Heart right ventricle (tissue), 16 donors: ENCODE measurements at regions of chr14 and their contacts with region 1.

Region 1: DNA sequence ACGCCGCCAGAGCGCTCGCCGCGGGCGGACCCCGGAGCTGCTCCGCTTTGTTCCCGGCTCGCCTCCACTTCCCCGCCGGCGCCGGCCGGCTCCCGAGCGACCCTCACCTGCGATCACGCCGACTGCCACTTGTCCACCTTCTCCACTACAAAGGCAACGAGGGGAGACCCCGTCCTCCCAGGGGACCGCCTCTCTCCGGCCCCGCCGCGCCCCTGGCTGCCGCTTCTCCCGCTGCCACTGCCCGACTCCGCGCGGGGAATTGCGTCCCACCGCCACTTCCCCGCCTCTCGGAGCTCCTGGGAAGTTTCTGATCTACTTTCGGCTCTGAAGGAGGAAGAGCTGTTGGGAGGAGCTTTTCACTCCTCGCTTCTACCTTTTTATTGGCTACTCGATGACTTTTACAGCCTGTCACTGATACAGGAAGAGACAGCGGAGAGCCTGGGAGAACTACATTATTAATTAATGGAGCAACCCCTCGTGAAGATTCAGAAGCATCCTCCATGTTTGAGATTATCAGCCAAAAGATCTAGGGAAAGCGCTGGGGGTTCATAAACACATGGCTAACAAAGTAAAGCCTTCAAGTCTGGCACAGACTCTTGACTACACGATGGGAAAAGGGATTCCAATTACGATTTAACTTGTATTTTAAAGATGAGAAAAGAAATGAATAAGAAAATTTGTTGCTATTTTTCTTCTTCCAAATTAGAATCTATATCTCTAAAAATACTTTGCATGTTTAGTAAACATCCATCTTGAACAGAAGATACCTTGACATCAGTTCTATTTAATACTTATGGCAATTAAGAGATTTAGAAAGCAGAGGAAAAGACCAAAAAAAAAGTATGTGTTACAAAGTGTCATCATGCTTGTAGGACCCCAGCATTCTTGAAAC is at the start of gene BAZ1A:
- DNase-seq: peak; percentile 59 to 65
- ATAC-seq: peak; percentile 22 to 71 (median 56)
- H3K4me3 ChIP-seq: peak within 1 kb of the TSS; percentile 73 to 96 (median 81)
- H3K27ac ChIP-seq: peak within 1 kb of the TSS; percentile 93 to 100 (median 98)
- H3K4me1 ChIP-seq: peaks cover 0 to 36% (median 7%) of the 10 kb centered on the region in 9 donors
- H3K27me3 ChIP-seq: no peaks in the 10 kb centered on the region
- CTCF ChIP-seq: peak in 5 of 9 donors; percentile 5 to 44 (median 41)
- total RNA-seq, gene BAZ1A: 3.8 to 14.5 (median 4.5) TPM

Region 2: GRCh38 chr14:34826661-34827060 is 48.6 kb before region 1 on chr14:
- intact Hi-C with region 1: loop called in 1 of 10 experiments (anchors 5 kb)
- DNase-seq: no peak
- ATAC-seq: no peak
- H3K4me3 ChIP-seq: no peak overlapping the region
- H3K27ac ChIP-seq: no peak overlapping the region
- H3K4me1 ChIP-seq: peaks cover 0 to 5% (median 0%) of the 10 kb centered on the region in 9 donors
- H3K27me3 ChIP-seq: no peaks in the 10 kb centered on the region
- CTCF ChIP-seq: no peak

Region 3: DNA sequence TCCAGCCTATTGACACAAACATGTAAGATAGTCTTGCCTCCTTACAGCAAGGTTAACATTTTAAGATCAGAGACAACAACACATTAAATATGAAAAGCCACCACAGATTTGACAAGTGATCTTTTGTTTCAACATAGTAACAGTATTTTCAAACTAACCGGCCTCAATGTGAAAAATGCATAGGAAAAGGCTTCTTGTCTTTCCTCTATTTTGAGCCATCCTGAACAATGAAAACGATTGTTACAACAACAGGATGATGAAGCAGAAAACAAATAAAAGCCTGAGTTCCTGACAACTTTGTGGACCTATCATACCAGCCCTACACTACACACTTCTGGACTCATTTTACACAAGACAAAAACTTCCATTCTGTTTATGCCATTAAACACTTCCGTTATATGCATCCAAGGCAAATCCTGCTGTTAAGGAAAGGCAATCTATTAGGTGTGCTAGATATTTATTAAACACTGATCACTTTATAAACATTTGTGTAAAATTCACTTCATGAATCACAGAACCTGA is 37.4 kb before region 1 on chr14:
- intact Hi-C with region 1: no loop called
- DNase-seq: no peak
- ATAC-seq: no peak
- H3K4me3 ChIP-seq: no peak overlapping the region
- H3K27ac ChIP-seq: no peak overlapping the region
- H3K4me1 ChIP-seq: peaks cover 0 to 54% (median 10%) of the 10 kb centered on the region in 9 donors
- H3K27me3 ChIP-seq: no peaks in the 10 kb centered on the region
- CTCF ChIP-seq: no peak

Region 4: DNA sequence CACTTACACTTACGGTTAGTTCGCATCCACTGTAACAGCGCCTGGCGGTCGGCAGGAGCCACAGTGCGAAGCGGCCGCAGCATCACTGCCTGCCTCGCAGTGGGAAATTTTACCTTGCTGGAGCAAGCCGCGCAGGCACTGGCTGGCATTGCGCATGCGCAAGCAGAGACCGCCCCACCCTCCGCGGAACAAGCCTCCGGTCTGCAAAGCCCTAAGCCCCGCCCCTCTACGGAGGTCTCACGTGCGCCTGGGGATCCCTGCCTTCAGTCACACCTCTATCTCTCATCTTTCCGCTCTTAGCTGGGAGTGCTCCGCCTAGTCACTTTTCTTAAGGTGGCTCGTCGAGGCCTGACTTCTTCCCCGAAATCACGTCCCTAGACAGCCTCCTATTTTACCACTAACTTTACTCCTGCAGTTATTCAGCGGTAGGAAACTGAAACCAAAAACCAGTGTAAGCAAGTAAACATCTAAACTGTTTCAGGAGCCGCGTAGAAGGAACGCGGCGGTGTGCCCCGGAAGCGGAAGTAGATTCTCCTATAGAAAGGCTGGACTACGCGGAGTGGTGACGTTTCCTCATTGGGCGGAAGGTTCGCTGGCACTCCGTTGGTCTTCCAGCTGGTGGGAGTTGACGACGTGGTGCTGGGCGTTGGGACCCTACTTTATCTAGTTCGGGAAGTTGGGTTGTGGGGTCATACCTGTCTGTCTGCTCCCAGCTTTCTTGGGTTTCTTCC is 107.3 kb after region 1 on chr14 and contains the start of gene SRP54:
- intact Hi-C with region 1: loop called in 7 of 10 experiments (anchors 1 to 10 kb)
- DNase-seq: peak; percentile 98
- ATAC-seq: peak; percentile 96 to 98 (median 98)
- H3K4me3 ChIP-seq: peak within 1 kb of the TSS; percentile 49 to 94 (median 79)
- H3K27ac ChIP-seq: peak within 1 kb of the TSS; percentile 82 to 99 (median 96)
- H3K4me1 ChIP-seq: peaks cover 0 to 52% (median 38%) of the 10 kb centered on the region in 9 donors
- H3K27me3 ChIP-seq: no peaks in the 10 kb centered on the region
- CTCF ChIP-seq: peak in 1 of 9 donors; percentile 26
- total RNA-seq, gene SRP54: 29.2 to 38.2 (median 34.6) TPM